BJ (cell line): ENCODE measurements at regions of chr12 and their contacts with region 1.

Region 1: GRCh38 chr12:85057370-85057963 is 21.3 kb downstream of the LRRIQ1 start:
- DNase-seq: no peak
- H3K4me3 ChIP-seq: no peak overlapping the region
- H3K27me3 ChIP-seq: no peaks in the 10 kb centered on the region
- CTCF ChIP-seq: peak; percentile 80

Region 2: DNA sequence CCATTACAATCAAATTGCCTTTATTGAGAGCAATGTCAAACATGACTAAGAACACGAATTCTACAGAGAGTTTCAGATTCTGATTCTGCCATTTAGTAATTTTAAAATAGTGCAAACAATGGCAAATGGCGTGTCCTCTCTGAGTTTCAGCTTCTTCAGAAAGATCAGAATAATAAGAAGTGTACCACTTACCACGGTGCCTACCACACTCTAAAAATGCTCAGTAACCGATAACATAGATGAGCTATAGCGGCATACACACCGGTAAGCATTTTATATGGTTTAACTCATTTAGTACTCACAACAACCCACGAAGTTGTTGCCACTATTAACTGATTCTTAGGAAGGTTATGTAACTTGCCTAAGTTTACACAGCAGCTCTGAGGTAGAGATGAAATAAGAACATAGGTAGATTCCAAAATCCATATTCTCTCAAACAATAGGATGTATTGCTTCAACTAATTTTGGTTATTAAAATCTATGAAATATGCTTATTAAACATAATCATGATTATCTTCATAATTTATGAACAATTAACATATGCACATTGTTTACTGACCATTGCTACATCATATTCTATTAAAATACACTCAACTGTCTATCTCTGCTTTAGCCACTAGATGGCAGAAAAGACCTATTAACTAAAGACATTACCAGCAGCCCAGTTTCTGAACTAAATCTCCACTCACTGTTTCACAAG is 183.2 kb before region 1 on chr12:
- CTCF ChIA-PET with region 1: interaction called, 22 read pairs
- POLR2A ChIA-PET with region 1: no interaction called
- DNase-seq: no peak
- H3K4me3 ChIP-seq: no peak overlapping the region
- H3K27me3 ChIP-seq: no peaks in the 10 kb centered on the region
- CTCF ChIP-seq: peak; percentile 59

Region 3: DNA sequence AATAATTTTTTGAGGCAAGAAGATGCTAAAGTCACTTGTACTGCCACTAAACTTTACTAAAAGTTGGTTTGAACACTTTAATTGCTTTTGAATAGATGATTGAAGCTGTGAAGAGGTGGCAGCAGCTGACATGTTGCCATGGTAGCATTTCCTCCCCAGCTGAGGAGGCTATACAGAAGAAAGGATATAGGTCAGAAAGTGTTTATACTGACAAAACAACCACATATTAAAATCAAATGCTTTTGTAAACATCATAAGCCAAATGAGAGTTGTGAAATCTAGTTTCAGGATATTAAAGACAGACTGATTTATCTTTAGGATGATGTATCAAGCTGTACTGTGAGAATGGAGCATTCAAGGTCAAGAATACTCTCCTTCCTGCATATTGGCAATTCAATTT is 63.0 kb before region 1 on chr12:
- CTCF ChIA-PET with region 1: no interaction called
- POLR2A ChIA-PET with region 1: no interaction called
- DNase-seq: no peak
- H3K4me3 ChIP-seq: no peak overlapping the region
- H3K27me3 ChIP-seq: no peaks in the 10 kb centered on the region
- CTCF ChIP-seq: no peak

Region 4: DNA sequence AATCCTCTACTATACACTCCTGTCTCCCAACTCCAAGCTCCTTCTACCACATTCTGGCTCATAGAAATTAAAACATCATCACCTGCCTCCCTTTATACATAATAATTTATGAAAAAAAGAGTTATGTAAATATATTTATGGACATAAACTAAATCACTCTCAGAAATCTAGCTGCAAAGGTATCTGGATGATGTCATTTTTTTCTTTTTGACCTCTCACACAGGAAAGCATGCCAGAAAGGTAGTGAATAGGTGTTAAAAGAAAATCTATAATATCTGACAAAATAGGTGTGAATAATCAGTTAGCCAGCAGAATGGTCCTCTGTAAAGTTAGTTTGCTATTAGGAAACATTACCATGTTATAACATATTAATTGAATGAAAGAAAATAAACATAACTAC is 13.6 kb before region 1 on chr12:
- CTCF ChIA-PET with region 1: interaction called, 10 read pairs
- POLR2A ChIA-PET with region 1: no interaction called
- DNase-seq: no peak
- H3K4me3 ChIP-seq: no peak overlapping the region
- H3K27me3 ChIP-seq: no peaks in the 10 kb centered on the region
- CTCF ChIP-seq: no peak